ENCODE measurements at regions of chr21 and their contacts with region 1.

Region 1: GRCh38 chr21:16330082-16330907 is 600.5 kb downstream of the USP25 start:
- DNase-seq: peak in 1 of 2 donors; percentile 90
- H3K4me3 ChIP-seq: no peak overlapping the region
- H3K27ac ChIP-seq: peak overlapping the region in 1 of 5 donors; percentile 7
- H3K4me1 ChIP-seq: no peaks in the 10 kb centered on the region
- H3K27me3 ChIP-seq: no peaks in the 10 kb centered on the region
- CTCF ChIP-seq: peak in 5 of 7 experiments; percentile 52 to 70 (median 59)
- EP300 ChIP-seq: no peak
- POLR2A ChIP-seq: no peak

Region 2: GRCh38 chr21:16082038-16082816 is 248.1 kb before region 1 on chr21:
- intact Hi-C with region 1: loop called (anchors 5 kb)
- DNase-seq: no peak
- H3K4me3 ChIP-seq: no peak overlapping the region
- H3K27ac ChIP-seq: peak overlapping the region in 1 of 5 donors; percentile 14
- H3K4me1 ChIP-seq: peaks cover 0 to 15% (median 0%) of the 10 kb centered on the region in 4 donors
- H3K27me3 ChIP-seq: no peaks in the 10 kb centered on the region
- CTCF ChIP-seq: peak in 4 of 7 experiments; percentile 16 to 63 (median 28)
- EP300 ChIP-seq: no peak
- POLR2A ChIP-seq: no peak

Region 3: GRCh38 chr21:16294128-16294527 is 36.2 kb before region 1 on chr21:
- intact Hi-C with region 1: no loop called
- DNase-seq: no peak
- H3K4me3 ChIP-seq: no peak overlapping the region
- H3K27ac ChIP-seq: no peak overlapping the region
- H3K4me1 ChIP-seq: no peaks in the 10 kb centered on the region
- H3K27me3 ChIP-seq: no peaks in the 10 kb centered on the region
- CTCF ChIP-seq: no peak
- EP300 ChIP-seq: no peak
- POLR2A ChIP-seq: no peak

Region 4: GRCh38 chr21:16388911-16389515 is 58.7 kb after region 1 on chr21:
- intact Hi-C with region 1: no loop called
- DNase-seq: no peak
- H3K4me3 ChIP-seq: no peak overlapping the region
- H3K27ac ChIP-seq: no peak overlapping the region
- H3K4me1 ChIP-seq: no peaks in the 10 kb centered on the region
- H3K27me3 ChIP-seq: no peaks in the 10 kb centered on the region
- CTCF ChIP-seq: no peak
- EP300 ChIP-seq: no peak
- POLR2A ChIP-seq: no peak

Region 5: GRCh38 chr21:16509476-16509875 is 179.2 kb after region 1 on chr21:
- intact Hi-C with region 1: no loop called
- DNase-seq: peak in 1 of 2 donors; percentile 19
- H3K4me3 ChIP-seq: no peak overlapping the region
- H3K27ac ChIP-seq: no peak overlapping the region
- H3K4me1 ChIP-seq: no peaks in the 10 kb centered on the region
- H3K27me3 ChIP-seq: no peaks in the 10 kb centered on the region
- CTCF ChIP-seq: no peak
- EP300 ChIP-seq: no peak
- POLR2A ChIP-seq: no peak

Region 6: GRCh38 chr21:16678429-16679160 is 348.3 kb after region 1 on chr21:
- intact Hi-C with region 1: no loop called
- DNase-seq: peak in 1 of 2 donors; percentile 43
- H3K4me3 ChIP-seq: no peak overlapping the region
- H3K27ac ChIP-seq: no peak overlapping the region
- H3K4me1 ChIP-seq: no peaks in the 10 kb centered on the region
- H3K27me3 ChIP-seq: no peaks in the 10 kb centered on the region
- CTCF ChIP-seq: no peak
- EP300 ChIP-seq: no peak
- POLR2A ChIP-seq: no peak